ENCODE measurements at regions of chr12 and their contacts with region 1.

Region 1: DNA sequence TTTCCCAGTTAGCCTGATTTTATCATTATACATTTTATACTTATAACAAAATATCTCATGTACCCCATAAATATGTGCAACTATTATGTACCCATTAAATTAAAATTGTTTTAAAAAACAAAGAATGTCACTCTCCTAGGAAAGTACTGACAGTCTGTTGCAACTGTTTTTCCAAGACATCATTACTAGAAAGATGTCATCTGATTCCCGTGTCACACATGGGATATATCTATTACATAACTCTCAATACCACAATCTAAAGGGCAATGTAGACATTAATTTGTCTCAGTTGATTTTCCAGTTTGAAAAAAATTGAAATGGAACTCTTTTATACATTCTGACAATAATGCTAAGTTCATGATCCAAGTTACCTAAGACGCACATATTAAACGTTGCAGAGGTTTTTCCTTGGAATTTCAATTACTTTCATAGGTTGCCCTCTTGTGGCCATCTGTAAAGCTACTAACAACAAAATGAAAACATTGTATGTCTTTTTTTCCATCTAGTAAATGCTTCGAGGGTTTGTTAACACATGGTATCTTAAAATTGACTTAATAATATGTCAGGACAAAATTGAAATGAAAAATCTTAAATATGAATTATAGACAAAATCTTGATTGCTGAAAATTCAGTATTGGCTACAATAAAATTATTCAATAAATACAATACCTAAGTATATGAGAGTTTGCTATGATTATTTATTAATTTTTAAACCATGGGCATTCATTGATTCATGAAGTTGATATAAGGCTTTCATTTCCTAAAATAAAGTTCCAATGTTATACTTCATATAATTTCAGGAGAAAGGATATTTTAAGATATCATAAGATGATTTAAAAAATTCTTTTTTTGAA is 131.6 kb downstream of the PPFIA2 start:
- DNase-seq: no peak
- ATAC-seq: no peak
- H3K4me3 ChIP-seq: no peak overlapping the region
- H3K27ac ChIP-seq: no peak overlapping the region
- H3K4me1 ChIP-seq: no peaks in the 10 kb centered on the region
- H3K27me3 ChIP-seq: no peaks in the 10 kb centered on the region
- CTCF ChIP-seq: peak; percentile 52

Region 2: GRCh38 chr12:81450920-81451739 is 176.4 kb before region 1 on chr12:
- intact Hi-C with region 1: loop called (anchors 5 kb)
- DNase-seq: no peak
- ATAC-seq: peak; percentile 74 to 77
- H3K4me3 ChIP-seq: no peak overlapping the region
- H3K27ac ChIP-seq: no peak overlapping the region
- H3K4me1 ChIP-seq: no peaks in the 10 kb centered on the region
- H3K27me3 ChIP-seq: no peaks in the 10 kb centered on the region
- CTCF ChIP-seq: peak; percentile 57

Region 3: GRCh38 chr12:82055391-82055790 is 427.8 kb after region 1 on chr12:
- intact Hi-C with region 1: no loop called
- DNase-seq: no peak
- ATAC-seq: no peak
- H3K4me3 ChIP-seq: no peak overlapping the region
- H3K27ac ChIP-seq: no peak overlapping the region
- H3K4me1 ChIP-seq: no peaks in the 10 kb centered on the region
- H3K27me3 ChIP-seq: no peaks in the 10 kb centered on the region
- CTCF ChIP-seq: no peak

Measured in lower lobe of right lung (tissue), 2 donors.